ENCODE measurements at regions of chr2 and their contacts with region 1.

Region 1: DNA sequence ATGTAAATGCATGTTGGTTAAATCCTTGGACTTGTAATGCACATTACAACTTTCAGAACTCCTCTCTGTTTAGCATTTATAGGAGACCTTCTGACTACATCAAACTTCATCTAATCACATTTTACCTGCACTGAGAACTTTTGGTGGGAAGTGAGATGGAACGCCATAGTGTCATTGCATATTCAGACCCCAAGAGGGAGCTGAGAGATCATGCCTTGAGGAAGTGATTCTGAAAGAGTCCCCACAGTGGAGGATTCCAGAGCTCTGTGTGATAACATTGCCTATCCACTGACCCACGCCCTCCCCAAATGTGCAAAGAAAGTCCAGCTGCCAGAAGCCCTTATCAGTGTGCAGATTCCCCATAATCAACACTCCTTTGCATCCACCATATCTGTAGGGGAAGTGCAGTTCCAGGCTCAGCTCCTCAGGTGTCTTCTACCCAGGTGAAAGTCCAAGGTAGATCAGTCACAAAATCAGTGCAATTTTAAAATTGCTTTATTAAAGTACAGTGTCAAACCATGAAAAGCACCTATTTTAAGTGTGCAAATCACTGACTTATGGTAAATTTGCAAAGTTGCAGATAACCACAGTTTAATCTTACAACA is 212.4 kb downstream of the RPIA start:
- DNase-seq: peak in 2 of 35 experiments; percentile 1 to 30
- ATAC-seq: peak in 1 of 4 experiments; percentile 43
- H3K4me3 ChIP-seq: no peak overlapping the region
- H3K4me3 Mint-ChIP-seq: no peak overlapping the region
- H3K27ac ChIP-seq: no peak overlapping the region
- H3K27ac Mint-ChIP-seq: no peak overlapping the region
- H3K4me1 ChIP-seq: no peaks in the 10 kb centered on the region
- H3K4me1 Mint-ChIP-seq: no peaks in the 10 kb centered on the region
- H3K27me3 ChIP-seq: no peaks in the 10 kb centered on the region
- H3K27me3 Mint-ChIP-seq: peaks cover 4 to 13% of the 10 kb centered on the region in 2 donors

Region 2: DNA sequence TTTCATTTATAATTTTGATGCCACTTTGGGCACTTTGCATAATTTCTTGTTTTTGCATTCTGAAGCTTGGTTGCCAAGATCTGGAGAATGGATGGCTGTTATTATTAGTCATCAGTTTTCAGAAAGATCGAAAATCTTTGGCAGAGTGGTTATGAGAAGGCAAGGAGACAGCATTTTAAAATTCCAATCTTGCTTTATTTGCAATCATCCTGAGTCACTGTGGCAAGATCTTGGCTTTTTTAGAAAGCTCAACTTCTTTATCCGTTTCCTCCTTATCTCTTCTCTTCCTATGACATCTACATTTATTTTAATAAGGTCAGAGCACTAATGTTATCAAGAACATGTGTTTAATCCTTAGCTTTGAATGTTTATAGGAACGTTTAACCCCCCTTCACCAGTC is 245.5 kb before region 1 on chr2:
- CTCF ChIA-PET with region 1: no interaction called
- POLR2A ChIA-PET with region 1: no interaction called
- DNase-seq: no peak
- ATAC-seq: no peak
- H3K4me3 ChIP-seq: no peak overlapping the region
- H3K4me3 Mint-ChIP-seq: no peak overlapping the region
- H3K27ac ChIP-seq: no peak overlapping the region
- H3K27ac Mint-ChIP-seq: no peak overlapping the region
- H3K4me1 ChIP-seq: no peaks in the 10 kb centered on the region
- H3K4me1 Mint-ChIP-seq: no peaks in the 10 kb centered on the region
- H3K27me3 ChIP-seq: no peaks in the 10 kb centered on the region
- H3K27me3 Mint-ChIP-seq: no peaks in the 10 kb centered on the region

Region 3: DNA sequence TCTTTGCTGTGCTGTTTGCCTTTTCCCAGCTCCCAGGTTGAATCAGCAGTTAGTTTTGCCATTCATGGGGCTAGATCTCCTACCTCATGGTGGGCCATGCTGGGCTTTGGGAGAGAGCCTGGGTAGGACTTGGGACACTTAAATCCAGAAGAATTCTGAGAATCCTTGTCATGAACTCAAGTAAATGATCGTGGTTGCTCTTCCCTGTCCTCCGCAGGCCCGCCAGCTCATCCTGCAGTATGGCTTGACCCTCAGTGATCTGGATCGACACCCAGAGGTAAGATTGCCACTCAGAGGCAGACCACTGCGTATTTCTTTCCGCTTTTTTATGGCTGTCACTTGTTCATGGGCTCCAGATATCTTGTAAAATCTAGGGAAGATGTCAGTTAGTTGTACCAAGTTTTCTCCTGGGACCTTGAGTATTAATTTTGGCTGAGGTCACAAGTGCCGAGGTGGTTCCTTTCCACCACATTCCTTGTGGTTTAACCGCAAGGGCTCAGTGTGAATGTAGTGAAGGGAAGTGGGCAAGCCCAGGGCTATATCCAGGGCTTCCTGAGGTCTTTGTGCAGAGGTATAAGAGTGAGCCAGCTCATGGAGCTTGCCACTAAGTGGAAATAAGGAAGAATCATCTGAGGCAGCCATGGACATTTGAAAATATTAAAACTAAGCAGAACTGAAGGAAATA is 174.6 kb before region 1 on chr2:
- CTCF ChIA-PET with region 1: no interaction called
- POLR2A ChIA-PET with region 1: interaction called in 1 of 2 experiments, 17 read pairs
- DNase-seq: no peak
- ATAC-seq: no peak
- H3K4me3 ChIP-seq: no peak overlapping the region
- H3K4me3 Mint-ChIP-seq: no peak overlapping the region
- H3K27ac ChIP-seq: no peak overlapping the region
- H3K27ac Mint-ChIP-seq: no peak overlapping the region
- H3K4me1 ChIP-seq: peaks cover 0 to 3% of the 10 kb centered on the region in 2 experiments
- H3K4me1 Mint-ChIP-seq: peaks cover 13 to 28% (median 26%) of the 10 kb centered on the region in 3 donors
- H3K27me3 ChIP-seq: no peaks in the 10 kb centered on the region
- H3K27me3 Mint-ChIP-seq: no peaks in the 10 kb centered on the region

Region 4: DNA sequence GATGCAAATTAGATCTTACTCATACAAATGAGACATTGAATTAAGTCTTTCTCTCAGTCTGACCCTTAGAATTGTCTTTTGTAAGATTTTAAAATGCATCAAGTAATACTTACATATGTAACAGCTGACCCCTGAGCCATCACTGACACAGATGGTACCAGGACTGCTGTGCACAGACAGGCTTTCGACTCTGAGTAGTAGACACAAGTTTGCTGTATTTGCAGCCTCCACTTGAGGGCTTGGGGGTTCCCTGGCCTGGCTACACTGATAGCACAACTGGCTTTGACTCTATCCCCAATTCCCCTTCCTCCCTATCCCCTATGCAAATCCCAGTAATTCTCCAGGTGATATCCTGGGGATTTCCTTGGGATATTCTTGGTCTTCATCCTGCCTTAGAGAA is 11.6 kb before region 1 on chr2:
- CTCF ChIA-PET with region 1: no interaction called
- POLR2A ChIA-PET with region 1: no interaction called
- DNase-seq: no peak
- ATAC-seq: no peak
- H3K4me3 ChIP-seq: no peak overlapping the region
- H3K4me3 Mint-ChIP-seq: no peak overlapping the region
- H3K27ac ChIP-seq: no peak overlapping the region
- H3K27ac Mint-ChIP-seq: no peak overlapping the region
- H3K4me1 ChIP-seq: no peaks in the 10 kb centered on the region
- H3K4me1 Mint-ChIP-seq: no peaks in the 10 kb centered on the region
- H3K27me3 ChIP-seq: no peaks in the 10 kb centered on the region
- H3K27me3 Mint-ChIP-seq: peaks cover 2 to 8% of the 10 kb centered on the region in 2 donors

Region 5: GRCh38 chr2:88927128-88927527 is 23.3 kb after region 1 on chr2:
- CTCF ChIA-PET with region 1: no interaction called
- POLR2A ChIA-PET with region 1: no interaction called
- DNase-seq: no peak
- ATAC-seq: no peak
- H3K4me3 ChIP-seq: no peak overlapping the region
- H3K4me3 Mint-ChIP-seq: no peak overlapping the region
- H3K27ac ChIP-seq: no peak overlapping the region
- H3K27ac Mint-ChIP-seq: no peak overlapping the region
- H3K4me1 ChIP-seq: no peaks in the 10 kb centered on the region
- H3K4me1 Mint-ChIP-seq: no peaks in the 10 kb centered on the region
- H3K27me3 ChIP-seq: no peaks in the 10 kb centered on the region
- H3K27me3 Mint-ChIP-seq: no peaks in the 10 kb centered on the region

Measured in T-cell (primary cell).